Activated CD4-positive, alpha-beta memory T cell treated with anti-CD3 and anti-CD28 coated beads for 36 hours (primary cell): ENCODE measurements at regions of chr17 and their contacts with region 1.

Region 1: GRCh38 chr17:47205419-47205963 is 3.7 kb upstream of the MYL4 start:
- DNase-seq: peak; percentile 83
- H3K4me3 Mint-ChIP-seq: peak overlapping the region; percentile 57
- H3K27ac Mint-ChIP-seq: peak overlapping the region; percentile 95
- H3K4me1 Mint-ChIP-seq: peaks cover 53% of the 10 kb centered on the region
- H3K27me3 Mint-ChIP-seq: no peaks in the 10 kb centered on the region

Region 2: GRCh38 chr17:47099987-47100711 is 105.3 kb before region 1 on chr17:
- CTCF ChIA-PET with region 1: no interaction called
- POLR2A ChIA-PET with region 1: no interaction called
- intact Hi-C with region 1: no loop called
- DNase-seq: peak; percentile 95
- H3K4me3 Mint-ChIP-seq: peak overlapping the region; percentile 99
- H3K27ac Mint-ChIP-seq: peak overlapping the region; percentile 76
- H3K4me1 Mint-ChIP-seq: peaks cover 16% of the 10 kb centered on the region
- H3K27me3 Mint-ChIP-seq: no peaks in the 10 kb centered on the region

Region 3: DNA sequence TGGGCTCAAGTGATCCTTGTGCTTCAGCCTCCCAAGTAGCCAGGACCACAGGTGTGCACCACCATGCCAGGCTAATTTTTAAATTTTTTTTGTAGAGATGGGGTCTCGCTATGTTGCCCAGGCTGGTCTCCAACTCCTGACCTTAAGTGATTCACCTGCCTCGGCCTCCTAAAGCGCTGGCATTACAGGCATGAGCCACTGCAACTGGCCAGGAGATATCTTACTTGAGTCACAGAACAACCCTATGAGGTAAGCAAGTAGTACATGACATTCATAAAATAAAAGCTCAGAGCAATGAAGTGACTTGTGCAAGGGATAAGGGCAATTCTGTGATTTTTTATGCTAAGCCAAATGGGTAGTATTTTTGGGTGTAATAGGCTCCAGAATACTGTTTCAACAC is 73.7 kb before region 1 on chr17:
- CTCF ChIA-PET with region 1: no interaction called
- POLR2A ChIA-PET with region 1: no interaction called
- intact Hi-C with region 1: no loop called
- DNase-seq: no peak
- H3K4me3 Mint-ChIP-seq: no peak overlapping the region
- H3K27ac Mint-ChIP-seq: no peak overlapping the region
- H3K4me1 Mint-ChIP-seq: no peaks in the 10 kb centered on the region
- H3K27me3 Mint-ChIP-seq: no peaks in the 10 kb centered on the region

Region 4: DNA sequence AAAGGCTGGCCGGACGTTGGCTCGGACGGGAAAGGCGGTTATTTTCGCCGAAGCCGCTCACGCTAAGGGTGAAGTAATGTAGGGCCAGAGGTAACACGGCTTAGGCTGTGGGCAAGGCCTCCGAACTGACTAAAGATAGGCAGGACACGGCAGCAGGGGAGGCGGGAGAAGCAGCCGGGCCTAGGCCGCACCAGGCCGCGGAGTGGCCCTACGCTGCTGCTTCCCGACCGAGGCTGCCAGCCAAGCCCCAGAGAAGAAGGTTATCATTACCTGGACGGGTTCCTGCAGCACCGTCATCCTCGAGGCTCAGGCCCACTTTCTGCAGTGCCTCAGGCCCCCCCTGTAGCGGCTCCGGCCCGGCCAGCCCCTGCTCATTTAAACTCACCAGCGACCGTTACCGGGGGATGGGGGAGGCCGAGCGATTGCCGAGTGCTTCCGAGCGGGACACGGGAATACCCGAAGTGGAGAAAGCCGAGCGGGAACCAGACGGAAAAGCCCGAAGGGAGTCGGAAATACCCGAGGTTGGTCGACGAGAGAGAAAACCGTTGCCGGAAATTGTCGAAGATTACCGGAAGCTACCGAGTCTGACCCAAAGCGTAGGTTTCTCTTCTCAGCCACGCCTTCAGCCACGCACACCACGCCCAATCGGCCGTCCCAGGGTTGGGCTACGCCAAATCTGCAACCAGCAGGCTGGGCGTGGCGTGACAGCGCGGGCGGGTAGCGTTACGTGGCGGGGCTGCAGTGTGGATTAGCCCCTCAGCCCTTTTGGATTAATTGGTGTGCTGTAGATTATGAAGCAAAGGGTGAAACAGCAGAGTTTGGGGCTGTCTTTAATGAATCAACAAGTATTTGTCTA is 16.4 kb before region 1 on chr17 and contains the start of gene CDC27:
- CTCF ChIA-PET with region 1: interaction called, 3 read pairs
- POLR2A ChIA-PET with region 1: interaction called, 15 read pairs
- intact Hi-C with region 1: loop called (anchors 1 kb)
- DNase-seq: peak; percentile 100
- H3K4me3 Mint-ChIP-seq: peak within 1 kb of the TSS; percentile 93
- H3K27ac Mint-ChIP-seq: peak within 1 kb of the TSS; percentile 90
- H3K4me1 Mint-ChIP-seq: peaks cover 48% of the 10 kb centered on the region
- H3K27me3 Mint-ChIP-seq: no peaks in the 10 kb centered on the region
- total RNA-seq, gene CDC27: 113 to 133 TPM

Region 5: GRCh38 chr17:47220531-47220999 is 15.1 kb after region 1 on chr17:
- CTCF ChIA-PET with region 1: interaction called, 6 read pairs
- POLR2A ChIA-PET with region 1: interaction called, 6 read pairs
- intact Hi-C with region 1: loop called (anchors 1 kb)
- DNase-seq: peak; percentile 15
- H3K4me3 Mint-ChIP-seq: no peak overlapping the region
- H3K27ac Mint-ChIP-seq: no peak overlapping the region
- H3K4me1 Mint-ChIP-seq: peaks cover 32% of the 10 kb centered on the region
- H3K27me3 Mint-ChIP-seq: no peaks in the 10 kb centered on the region

Region 6: GRCh38 chr17:47286198-47286914 is 80.9 kb after region 1 on chr17:
- CTCF ChIA-PET with region 1: no interaction called
- POLR2A ChIA-PET with region 1: no interaction called
- intact Hi-C with region 1: no loop called
- DNase-seq: peak; percentile 33
- H3K4me3 Mint-ChIP-seq: no peak overlapping the region
- H3K27ac Mint-ChIP-seq: no peak overlapping the region
- H3K4me1 Mint-ChIP-seq: peaks cover 5% of the 10 kb centered on the region
- H3K27me3 Mint-ChIP-seq: peaks cover 2% of the 10 kb centered on the region